ENCODE measurements at regions of chr1 and their contacts with region 1.

Region 1: DNA sequence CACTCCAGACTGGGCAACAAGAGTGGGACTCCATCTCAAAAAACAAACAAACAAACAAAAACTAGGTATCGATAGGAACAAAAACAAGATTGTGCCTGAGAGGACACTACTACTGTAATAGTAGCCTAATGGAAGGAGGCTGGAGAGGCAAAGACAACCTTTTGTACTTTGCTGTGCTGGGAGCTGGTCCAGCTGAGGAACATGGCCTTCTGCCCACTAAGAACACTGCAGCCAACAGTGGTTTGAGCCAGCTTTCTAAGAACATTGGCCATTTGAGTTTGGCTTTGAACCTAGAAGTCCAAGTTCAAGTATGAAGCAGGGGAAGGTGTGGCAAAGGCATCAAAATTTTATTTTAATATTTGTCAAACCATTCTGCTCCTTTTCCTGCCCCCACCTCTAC is 22.7 kb upstream of the RGS8 start:
- DNase-seq: no peak
- H3K4me3 Mint-ChIP-seq: no peak overlapping the region
- H3K27ac Mint-ChIP-seq: no peak overlapping the region
- H3K4me1 Mint-ChIP-seq: peaks cover 28% of the 10 kb centered on the region
- H3K27me3 Mint-ChIP-seq: peaks cover 4% of the 10 kb centered on the region

Region 2: GRCh38 chr1:182348961-182349747 is 358.0 kb before region 1 on chr1:
- intact Hi-C with region 1: no loop called
- DNase-seq: no peak
- H3K4me3 Mint-ChIP-seq: no peak overlapping the region
- H3K27ac Mint-ChIP-seq: no peak overlapping the region
- H3K4me1 Mint-ChIP-seq: no peaks in the 10 kb centered on the region
- H3K27me3 Mint-ChIP-seq: peaks cover 5% of the 10 kb centered on the region

Region 3: DNA sequence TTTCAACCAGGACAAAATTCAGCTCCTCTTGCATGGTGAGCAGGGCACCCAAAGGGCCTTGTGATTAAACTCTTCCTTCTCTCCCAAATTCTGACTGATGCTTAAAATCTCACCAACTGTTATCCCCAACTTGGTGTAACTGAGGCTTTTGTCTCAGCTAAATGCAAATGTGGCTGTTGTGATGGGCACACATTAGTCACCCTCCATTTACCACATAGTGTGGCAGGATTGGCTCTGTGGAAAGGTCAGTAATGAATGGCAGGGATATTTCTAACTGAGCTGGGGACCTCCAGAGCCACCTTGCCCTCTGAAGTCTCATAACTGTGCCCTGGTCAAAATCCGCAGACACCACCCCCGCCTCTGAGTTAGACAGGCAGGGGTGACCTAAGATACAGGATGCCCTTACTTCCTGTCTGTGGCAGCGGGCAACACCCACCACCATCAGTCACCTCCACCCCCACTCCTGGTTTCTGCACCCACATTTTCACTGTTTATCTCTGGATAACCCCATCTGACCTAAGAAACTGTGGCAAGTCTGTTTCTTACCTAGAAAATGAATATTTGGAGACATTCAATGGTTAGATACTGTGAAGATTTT is 77.5 kb before region 1 on chr1:
- intact Hi-C with region 1: loop called (anchors 1 kb)
- DNase-seq: peak; percentile 16
- H3K4me3 Mint-ChIP-seq: no peak overlapping the region
- H3K27ac Mint-ChIP-seq: peak overlapping the region; percentile 56
- H3K4me1 Mint-ChIP-seq: peaks cover 61% of the 10 kb centered on the region
- H3K27me3 Mint-ChIP-seq: peaks cover 21% of the 10 kb centered on the region

Region 4: DNA sequence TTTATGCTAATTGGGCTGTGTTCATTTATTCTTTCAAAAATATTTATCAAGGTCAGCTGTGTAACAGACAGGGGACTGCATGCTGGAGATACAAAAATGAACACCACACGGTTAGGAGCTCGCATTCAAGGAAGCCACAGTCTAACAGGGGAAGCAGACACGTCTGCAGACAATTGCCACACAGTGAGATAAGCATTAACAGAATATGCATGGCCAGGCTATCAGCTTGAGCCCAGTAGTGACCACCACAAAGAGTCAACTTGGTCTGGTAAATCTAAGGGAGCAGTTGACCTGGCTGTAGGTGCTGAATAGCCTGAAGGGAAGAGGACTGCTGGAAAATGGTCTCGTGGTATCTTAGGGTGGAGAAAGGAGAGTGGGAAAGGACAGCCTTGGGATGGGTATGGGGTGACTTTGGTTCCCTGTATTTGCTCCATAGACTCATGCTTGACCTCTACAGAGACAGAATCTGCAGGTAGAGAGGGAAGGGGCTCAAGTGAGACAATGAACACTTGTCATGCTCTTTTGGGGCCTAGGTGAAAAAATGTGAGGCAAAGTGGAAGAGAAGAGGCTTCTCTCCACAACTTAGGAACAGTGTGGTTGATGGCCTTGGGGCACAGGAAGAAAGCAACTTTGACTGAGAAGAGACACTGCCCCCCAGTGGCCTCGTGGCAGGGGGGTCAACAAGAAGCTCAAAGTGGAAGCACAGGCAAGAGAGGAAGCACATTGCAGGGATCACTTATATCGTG is 74.9 kb after region 1 on chr1:
- intact Hi-C with region 1: loop called (anchors 2 kb)
- DNase-seq: peak; percentile 55
- H3K4me3 Mint-ChIP-seq: no peak overlapping the region
- H3K27ac Mint-ChIP-seq: no peak overlapping the region
- H3K4me1 Mint-ChIP-seq: peaks cover 13% of the 10 kb centered on the region
- H3K27me3 Mint-ChIP-seq: peaks cover 8% of the 10 kb centered on the region

Region 5: GRCh38 chr1:183859831-183860230 is 1152.7 kb after region 1 on chr1:
- intact Hi-C with region 1: no loop called
- DNase-seq: no peak
- H3K4me3 Mint-ChIP-seq: no peak overlapping the region
- H3K27ac Mint-ChIP-seq: no peak overlapping the region
- H3K4me1 Mint-ChIP-seq: no peaks in the 10 kb centered on the region
- H3K27me3 Mint-ChIP-seq: no peaks in the 10 kb centered on the region